ENCODE measurements at regions of chr2 and their contacts with region 1.

Region 1: GRCh38 chr2:225091336-225091735 is 49.1 kb upstream of the DOCK10 start:
- DNase-seq: peak in 1 of 2 experiments; percentile 68
- H3K4me3 ChIP-seq: no peak overlapping the region
- H3K27ac ChIP-seq: peak overlapping the region; percentile 63
- H3K4me1 ChIP-seq: peaks cover 16% of the 10 kb centered on the region
- H3K27me3 ChIP-seq: no peaks in the 10 kb centered on the region
- CTCF ChIP-seq: no peak

Region 2: DNA sequence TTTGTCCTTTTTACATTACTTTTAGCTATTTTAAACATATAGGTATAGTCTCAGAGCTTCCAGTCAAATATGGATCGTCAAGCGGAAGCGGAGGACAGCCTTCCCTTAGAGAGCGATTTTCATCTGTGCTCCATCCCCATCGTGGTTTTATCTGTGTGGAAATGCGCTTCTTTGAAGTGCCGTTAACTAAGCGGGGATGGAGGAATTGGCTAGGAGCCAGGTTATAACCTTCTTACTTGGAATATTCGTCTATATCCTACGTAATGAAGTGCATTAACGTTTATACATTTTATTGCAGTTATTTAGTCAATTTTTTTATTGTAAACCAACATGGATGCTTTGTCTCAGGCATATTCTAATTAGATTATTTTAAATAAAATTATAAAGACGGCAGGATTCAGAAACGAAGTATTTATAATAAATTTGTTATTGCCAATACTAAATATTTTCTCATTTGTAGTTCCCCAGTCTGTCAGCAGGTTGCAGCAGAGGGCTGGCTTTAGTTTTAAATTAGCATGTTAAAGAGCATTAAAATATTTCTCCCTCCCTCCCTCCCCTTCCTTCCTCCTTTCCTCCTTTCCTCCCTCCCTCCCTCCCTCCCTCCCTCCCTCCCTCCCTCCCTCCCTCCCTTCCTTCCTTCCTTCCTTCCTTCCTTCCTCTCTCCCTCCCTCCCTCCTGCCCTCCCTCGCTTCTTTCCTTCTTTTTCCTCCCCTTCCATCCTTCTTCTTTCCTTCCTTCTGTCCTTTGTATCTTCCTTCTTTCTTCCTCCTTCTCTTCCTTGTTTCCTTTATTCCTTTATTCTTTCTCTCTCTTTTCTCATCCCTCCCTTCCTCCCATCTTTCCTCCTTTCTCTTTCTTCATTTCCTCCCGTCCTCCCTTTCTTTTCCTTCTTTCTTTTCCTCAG is 31.5 kb after region 1 on chr2:
- CTCF ChIA-PET with region 1: no interaction called
- POLR2A ChIA-PET with region 1: interaction called, 11 read pairs
- intact Hi-C with region 1: no loop called
- DNase-seq: peak in 1 of 2 experiments; percentile 24
- H3K4me3 ChIP-seq: no peak overlapping the region
- H3K27ac ChIP-seq: no peak overlapping the region
- H3K4me1 ChIP-seq: peaks cover 15% of the 10 kb centered on the region
- H3K27me3 ChIP-seq: no peaks in the 10 kb centered on the region
- CTCF ChIP-seq: peak; percentile 78

Measured in PC-9 (cell line).